Naive thymus-derived CD4-positive, alpha-beta T cell (primary cell): ENCODE measurements at regions of chr20 and their contacts with region 1.

Region 1: GRCh38 chr20:354298-355064 is 7.6 kb downstream of the NRSN2 start:
- DNase-seq: peak; percentile 64 to 86 (median 79)
- ATAC-seq: peak; percentile 100
- H3K4me3 ChIP-seq: no peak overlapping the region
- H3K4me3 Mint-ChIP-seq: no peak overlapping the region
- H3K27ac ChIP-seq: no peak overlapping the region
- H3K27ac Mint-ChIP-seq: no peak overlapping the region
- H3K4me1 ChIP-seq: peaks cover 0 to 3% of the 10 kb centered on the region in 2 donors
- H3K4me1 Mint-ChIP-seq: peaks cover 0 to 13% (median 5%) of the 10 kb centered on the region in 7 donors
- H3K27me3 ChIP-seq: no peaks in the 10 kb centered on the region
- H3K27me3 Mint-ChIP-seq: peaks cover 0 to 4% (median 0%) of the 10 kb centered on the region in 5 donors

Region 2: GRCh38 chr20:407133-407952 is 52.9 kb after region 1 on chr20:
- CTCF ChIA-PET with region 1: interaction called, 3 read pairs
- POLR2A ChIA-PET with region 1: interaction called, 4 read pairs
- intact Hi-C with region 1: loop called (anchors 1 to 2 kb)
- DNase-seq: peak in 8 of 9 donors; percentile 31 to 74 (median 39)
- ATAC-seq: peak; percentile 49
- H3K4me3 ChIP-seq: peak overlapping the region; percentile 71
- H3K4me3 Mint-ChIP-seq: peak overlapping the region; percentile 86 to 96 (median 94)
- H3K27ac ChIP-seq: peak overlapping the region; percentile 83
- H3K27ac Mint-ChIP-seq: peak overlapping the region; percentile 89 to 99 (median 96)
- H3K4me1 ChIP-seq: peaks cover 20 to 32% of the 10 kb centered on the region in 2 donors
- H3K4me1 Mint-ChIP-seq: peaks cover 26 to 59% (median 46%) of the 10 kb centered on the region in 7 donors
- H3K27me3 ChIP-seq: no peaks in the 10 kb centered on the region
- H3K27me3 Mint-ChIP-seq: no peaks in the 10 kb centered on the region

Region 3: GRCh38 chr20:438571-439469 is 84.3 kb after region 1 on chr20:
- CTCF ChIA-PET with region 1: no interaction called
- POLR2A ChIA-PET with region 1: no interaction called
- intact Hi-C with region 1: loop called (anchors 2 kb)
- DNase-seq: peak; percentile 29 to 72 (median 60)
- ATAC-seq: peak; percentile 91
- H3K4me3 ChIP-seq: peak overlapping the region; percentile 45
- H3K4me3 Mint-ChIP-seq: peak overlapping the region; percentile 76 to 97 (median 82)
- H3K27ac ChIP-seq: peak overlapping the region; percentile 39
- H3K27ac Mint-ChIP-seq: peak overlapping the region; percentile 10 to 90 (median 79)
- H3K4me1 ChIP-seq: peaks cover 38 to 42% of the 10 kb centered on the region in 2 donors
- H3K4me1 Mint-ChIP-seq: peaks cover 51 to 72% (median 68%) of the 10 kb centered on the region in 7 donors
- H3K27me3 ChIP-seq: no peaks in the 10 kb centered on the region
- H3K27me3 Mint-ChIP-seq: no peaks in the 10 kb centered on the region

Region 4: DNA sequence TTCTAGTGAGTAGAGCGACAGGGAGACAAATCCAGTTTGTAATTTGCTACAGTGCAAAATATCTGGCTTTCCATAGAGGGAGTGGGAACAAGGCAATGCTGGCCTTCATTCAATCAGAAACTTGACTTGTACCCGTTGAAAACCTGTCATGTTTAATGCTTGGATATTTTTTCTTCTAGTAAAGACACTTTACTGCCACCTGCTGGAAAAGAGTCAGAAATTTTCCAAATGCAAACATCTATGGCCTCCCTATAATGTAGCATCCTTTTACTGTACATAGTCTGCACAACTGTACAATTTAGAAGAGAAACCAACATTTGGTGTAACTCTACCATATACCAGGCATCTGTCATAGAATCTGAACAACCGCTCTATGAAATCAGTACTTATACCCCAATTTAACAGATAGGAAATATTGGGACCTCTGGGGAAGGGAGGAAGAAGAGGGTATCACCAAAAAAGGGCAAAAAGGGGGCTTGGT is 124.5 kb after region 1 on chr20:
- CTCF ChIA-PET with region 1: interaction called, 74 read pairs
- POLR2A ChIA-PET with region 1: interaction called, 4 read pairs
- intact Hi-C with region 1: loop called (anchors 1 kb)
- DNase-seq: peak in 7 of 9 donors; percentile 45 to 75 (median 68)
- ATAC-seq: peak; percentile 84
- H3K4me3 ChIP-seq: no peak overlapping the region
- H3K4me3 Mint-ChIP-seq: no peak overlapping the region
- H3K27ac ChIP-seq: no peak overlapping the region
- H3K27ac Mint-ChIP-seq: peak overlapping the region in 7 of 9 donors; percentile 27 to 82 (median 56)
- H3K4me1 ChIP-seq: peaks cover 0 to 6% of the 10 kb centered on the region in 2 donors
- H3K4me1 Mint-ChIP-seq: peaks cover 8 to 27% (median 24%) of the 10 kb centered on the region in 7 donors
- H3K27me3 ChIP-seq: no peaks in the 10 kb centered on the region
- H3K27me3 Mint-ChIP-seq: no peaks in the 10 kb centered on the region

Region 5: GRCh38 chr20:645318-646106 is 291.0 kb after region 1 on chr20:
- CTCF ChIA-PET with region 1: interaction called, 6 read pairs
- POLR2A ChIA-PET with region 1: no interaction called
- intact Hi-C with region 1: loop called in 1 of 2 experiments (anchors 1 kb)
- DNase-seq: peak; percentile 28 to 79 (median 51)
- ATAC-seq: peak; percentile 83
- H3K4me3 ChIP-seq: no peak overlapping the region
- H3K4me3 Mint-ChIP-seq: no peak overlapping the region
- H3K27ac ChIP-seq: no peak overlapping the region
- H3K27ac Mint-ChIP-seq: no peak overlapping the region
- H3K4me1 ChIP-seq: no peaks in the 10 kb centered on the region
- H3K4me1 Mint-ChIP-seq: peaks cover 0 to 18% (median 15%) of the 10 kb centered on the region in 7 donors
- H3K27me3 ChIP-seq: peaks cover 0 to 11% of the 10 kb centered on the region in 2 donors
- H3K27me3 Mint-ChIP-seq: peaks cover 17 to 24% (median 23%) of the 10 kb centered on the region in 5 donors

Region 6: DNA sequence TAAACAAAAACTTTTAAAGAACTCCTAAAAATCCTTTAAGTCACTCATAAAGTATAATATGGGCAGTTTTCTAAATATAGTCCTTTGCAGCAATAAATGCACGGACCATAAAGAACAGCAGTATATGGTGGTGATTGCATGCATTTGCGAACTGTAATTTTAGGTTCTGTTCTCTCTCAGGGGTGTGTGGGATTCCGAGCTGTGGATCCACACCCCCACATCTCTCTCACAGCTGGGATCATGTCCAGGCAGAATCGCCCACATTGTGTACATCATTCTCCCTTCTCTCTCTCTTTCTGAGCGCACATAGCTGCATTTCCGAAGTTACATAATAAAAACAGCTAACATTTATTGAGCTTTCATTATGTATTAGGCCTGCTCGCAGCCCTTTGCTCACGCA is 385.3 kb after region 1 on chr20:
- CTCF ChIA-PET with region 1: no interaction called
- POLR2A ChIA-PET with region 1: no interaction called
- intact Hi-C with region 1: loop called in 1 of 2 experiments (anchors 2 kb)
- DNase-seq: no peak
- ATAC-seq: no peak
- H3K4me3 ChIP-seq: no peak overlapping the region
- H3K4me3 Mint-ChIP-seq: no peak overlapping the region
- H3K27ac ChIP-seq: no peak overlapping the region
- H3K27ac Mint-ChIP-seq: no peak overlapping the region
- H3K4me1 ChIP-seq: no peaks in the 10 kb centered on the region
- H3K4me1 Mint-ChIP-seq: peaks cover 0 to 4% (median 0%) of the 10 kb centered on the region in 7 donors
- H3K27me3 ChIP-seq: no peaks in the 10 kb centered on the region
- H3K27me3 Mint-ChIP-seq: peaks cover 6 to 26% (median 22%) of the 10 kb centered on the region in 5 donors